ENCODE measurements at regions of chr14 and their contacts with region 1.

Region 1: GRCh38 chr14:63727774-63728728 is at the start of gene SGPP1:
- DNase-seq: peak; percentile 94
- H3K4me3 ChIP-seq: peak within 1 kb of the TSS; percentile 100
- H3K27ac ChIP-seq: peak within 1 kb of the TSS; percentile 91
- H3K4me1 ChIP-seq: peaks cover 28% of the 10 kb centered on the region
- CTCF ChIP-seq: peak; percentile 62
- total RNA-seq, gene SGPP1: 19.4 and 21.0 TPM in 2 replicates

Region 2: GRCh38 chr14:63543000-63543825 is 184.8 kb before region 1 on chr14 and contains the start of gene PPP2R5E:
- CTCF ChIA-PET with region 1: no interaction called
- POLR2A ChIA-PET with region 1: interaction called, 4 read pairs
- intact Hi-C with region 1: loop called (anchors 1 kb)
- DNase-seq: peak; percentile 98
- H3K4me3 ChIP-seq: peak within 1 kb of the TSS; percentile 92
- H3K27ac ChIP-seq: peak within 1 kb of the TSS; percentile 70
- H3K4me1 ChIP-seq: peaks cover 25% of the 10 kb centered on the region
- CTCF ChIP-seq: no peak
- total RNA-seq, gene PPP2R5E: 10.1 and 12.5 TPM in 2 replicates

Region 3: DNA sequence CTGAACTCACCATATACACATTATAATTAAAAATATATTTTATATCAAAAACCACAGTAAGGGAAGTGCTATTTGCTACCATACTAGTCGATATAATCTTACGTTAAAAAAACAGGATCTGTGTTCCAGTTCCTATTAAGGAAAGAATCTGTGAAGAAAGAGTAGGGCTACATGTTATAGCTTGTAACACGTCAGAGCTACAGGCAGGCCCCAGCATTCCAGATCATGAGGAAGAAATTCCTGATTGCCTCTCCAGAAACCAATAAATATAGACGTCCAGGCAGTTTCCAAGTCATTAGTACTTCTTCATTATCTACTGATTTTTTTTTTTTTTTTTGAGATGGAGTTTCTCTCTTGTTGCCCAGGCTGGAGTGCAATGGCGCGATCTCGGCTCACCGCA is 20.8 kb before region 1 on chr14:
- CTCF ChIA-PET with region 1: no interaction called
- POLR2A ChIA-PET with region 1: interaction called, 11 read pairs
- intact Hi-C with region 1: no loop called
- DNase-seq: no peak
- H3K4me3 ChIP-seq: no peak overlapping the region
- H3K27ac ChIP-seq: no peak overlapping the region
- H3K4me1 ChIP-seq: peaks cover 50% of the 10 kb centered on the region
- CTCF ChIP-seq: no peak

Region 4: GRCh38 chr14:63770187-63770807 is 42.2 kb after region 1 on chr14:
- CTCF ChIA-PET with region 1: interaction called, 3 read pairs
- POLR2A ChIA-PET with region 1: interaction called, 4 read pairs
- intact Hi-C with region 1: loop called (anchors 1 kb)
- DNase-seq: peak; percentile 77
- H3K4me3 ChIP-seq: no peak overlapping the region
- H3K27ac ChIP-seq: no peak overlapping the region
- H3K4me1 ChIP-seq: no peaks in the 10 kb centered on the region
- CTCF ChIP-seq: peak; percentile 94

Region 5: GRCh38 chr14:63867933-63868921 is 140.2 kb after region 1 on chr14:
- CTCF ChIA-PET with region 1: no interaction called
- POLR2A ChIA-PET with region 1: interaction called, 3 read pairs
- intact Hi-C with region 1: loop called (anchors 5 kb)
- DNase-seq: peak; percentile 84
- H3K4me3 ChIP-seq: peak overlapping the region; percentile 27
- H3K27ac ChIP-seq: peak overlapping the region; percentile 89
- H3K4me1 ChIP-seq: peaks cover 88% of the 10 kb centered on the region
- CTCF ChIP-seq: no peak

Measured in OCI-LY7 (cell line).